GM13977 (cell line): ENCODE measurements at regions of chr1 and their contacts with region 1.

Region 1: DNA sequence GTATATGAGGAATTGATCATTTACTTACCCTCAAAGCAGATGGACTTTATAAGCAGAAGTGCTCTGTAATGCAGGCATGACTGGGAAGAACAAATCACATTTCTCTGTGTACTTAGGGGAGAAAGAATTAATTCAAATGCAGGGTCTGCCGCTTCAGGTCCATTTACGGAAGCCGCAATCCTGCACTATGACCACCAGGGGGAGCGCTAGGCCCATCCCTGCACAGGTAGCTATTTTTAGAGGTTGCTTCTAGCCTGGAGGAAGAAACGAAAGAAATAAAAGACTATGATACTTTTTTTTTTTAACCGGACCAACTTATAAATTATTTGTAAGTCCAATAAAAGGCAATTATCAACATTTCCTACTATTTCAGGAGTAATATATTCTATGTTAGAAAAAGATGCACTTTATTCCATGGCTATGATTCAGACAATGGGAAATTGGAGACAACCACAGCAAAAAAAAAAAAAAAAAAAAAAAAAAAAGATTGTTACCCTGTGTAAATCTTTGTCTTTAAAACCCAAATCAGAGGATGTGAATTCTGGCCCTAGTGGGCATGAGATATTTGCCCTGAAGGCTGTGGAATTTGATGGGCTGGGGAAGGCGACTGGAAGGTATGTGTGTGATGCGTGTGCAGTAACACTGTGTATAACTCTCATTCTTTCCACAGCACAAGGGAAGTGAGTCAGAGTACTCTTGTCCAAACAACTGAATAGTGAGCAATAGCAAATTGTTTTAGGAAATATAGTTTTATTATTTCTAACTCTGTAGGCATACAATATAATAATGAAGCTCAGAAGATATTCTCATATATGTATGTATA is 12.9 kb upstream of the FYB2 start:
- DNase-seq: peak; percentile 66
- CTCF ChIP-seq: peak; percentile 92

Region 2: GRCh38 chr1:58047265-58047858 is 1215.3 kb after region 1 on chr1:
- in situ Hi-C with region 1: loop called (anchors 25 kb)
- DNase-seq: peak; percentile 56
- CTCF ChIP-seq: peak; percentile 83